ENCODE measurements at regions of chr16 and their contacts with region 1.

Region 1: GRCh38 chr16:11396241-11397048 is 51.2 kb downstream of the RMI2 start:
- DNase-seq: peak; percentile 48 to 75
- ATAC-seq: peak; percentile 79

Region 2: DNA sequence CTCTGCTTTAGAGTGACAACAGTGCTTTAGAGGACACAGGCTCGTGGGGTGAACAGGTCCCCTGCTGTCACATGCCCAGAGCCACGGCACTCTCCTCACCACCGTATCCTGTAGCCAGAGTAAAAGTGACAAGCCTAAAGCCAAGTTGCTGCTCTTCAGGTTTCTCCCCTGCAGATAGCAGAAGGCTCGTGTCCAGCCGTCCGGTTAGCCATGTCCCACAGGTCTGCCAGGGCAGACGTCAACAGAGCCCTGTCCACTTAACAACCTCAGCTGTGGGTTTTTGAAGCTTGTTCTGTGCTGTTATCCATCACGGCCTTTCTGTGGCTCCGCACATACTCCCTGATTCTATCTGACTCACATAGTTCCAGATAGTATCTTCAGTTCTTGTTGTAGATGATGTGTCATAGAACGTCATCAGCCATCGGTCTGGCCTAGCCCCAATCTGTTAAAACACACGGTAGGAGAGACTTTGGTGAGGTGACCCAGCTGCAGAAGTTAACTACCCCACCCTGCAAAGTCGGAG is 241.1 kb before region 1 on chr16:
- intact Hi-C with region 1: no loop called
- DNase-seq: no peak
- ATAC-seq: no peak

Region 3: DNA sequence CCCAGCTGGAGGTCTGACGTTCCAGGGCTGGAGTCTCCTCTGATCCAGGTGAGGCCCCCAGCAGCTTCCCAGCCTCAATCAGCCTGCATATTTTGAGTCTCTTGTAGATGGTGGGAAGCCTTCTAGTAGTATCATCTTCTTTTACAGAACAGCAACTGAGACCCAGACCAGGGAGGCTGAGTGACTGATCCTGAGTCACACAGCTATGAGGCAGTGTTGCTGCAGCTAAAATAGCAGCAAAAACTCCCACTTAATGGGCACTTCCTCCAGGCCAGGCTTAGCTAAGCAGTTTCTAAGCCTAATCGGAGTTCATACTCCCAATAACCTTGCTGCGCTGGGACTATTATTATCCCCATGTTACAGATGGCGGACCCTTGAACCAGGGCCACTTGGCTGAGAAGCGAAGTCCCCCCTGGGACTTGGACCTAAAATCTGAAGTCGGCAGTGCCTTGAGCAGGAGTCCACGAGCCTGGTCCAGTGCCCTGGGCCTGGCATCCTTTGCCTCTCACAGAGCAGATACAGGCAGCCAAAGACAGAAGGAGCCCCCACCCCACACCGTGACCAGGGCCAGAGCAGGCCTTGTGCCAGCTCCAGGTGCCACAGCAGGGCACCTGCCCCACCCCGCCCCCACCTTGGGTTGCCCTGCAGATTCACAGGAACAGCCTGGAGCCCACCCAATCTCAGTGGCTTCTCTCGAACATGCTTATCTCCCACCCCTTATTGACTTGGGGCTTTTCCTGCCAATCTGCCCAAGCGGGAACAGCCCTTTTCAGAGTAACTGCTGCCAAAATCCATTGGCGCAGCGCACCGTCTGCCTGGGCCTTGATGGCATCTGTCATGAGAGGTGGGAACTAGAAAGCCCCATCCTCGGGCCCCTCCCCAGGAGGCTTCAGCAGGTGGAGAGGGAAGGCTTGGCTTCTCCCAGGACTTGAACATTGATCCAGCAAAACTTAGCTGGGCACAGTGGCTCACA is 205.6 kb before region 1 on chr16:
- intact Hi-C with region 1: no loop called
- DNase-seq: no peak
- ATAC-seq: no peak

Region 4: GRCh38 chr16:11715246-11715947 is 319.0 kb after region 1 on chr16:
- intact Hi-C with region 1: loop called in 1 of 2 experiments (anchors 5 kb)
- DNase-seq: no peak
- ATAC-seq: no peak

Region 5: DNA sequence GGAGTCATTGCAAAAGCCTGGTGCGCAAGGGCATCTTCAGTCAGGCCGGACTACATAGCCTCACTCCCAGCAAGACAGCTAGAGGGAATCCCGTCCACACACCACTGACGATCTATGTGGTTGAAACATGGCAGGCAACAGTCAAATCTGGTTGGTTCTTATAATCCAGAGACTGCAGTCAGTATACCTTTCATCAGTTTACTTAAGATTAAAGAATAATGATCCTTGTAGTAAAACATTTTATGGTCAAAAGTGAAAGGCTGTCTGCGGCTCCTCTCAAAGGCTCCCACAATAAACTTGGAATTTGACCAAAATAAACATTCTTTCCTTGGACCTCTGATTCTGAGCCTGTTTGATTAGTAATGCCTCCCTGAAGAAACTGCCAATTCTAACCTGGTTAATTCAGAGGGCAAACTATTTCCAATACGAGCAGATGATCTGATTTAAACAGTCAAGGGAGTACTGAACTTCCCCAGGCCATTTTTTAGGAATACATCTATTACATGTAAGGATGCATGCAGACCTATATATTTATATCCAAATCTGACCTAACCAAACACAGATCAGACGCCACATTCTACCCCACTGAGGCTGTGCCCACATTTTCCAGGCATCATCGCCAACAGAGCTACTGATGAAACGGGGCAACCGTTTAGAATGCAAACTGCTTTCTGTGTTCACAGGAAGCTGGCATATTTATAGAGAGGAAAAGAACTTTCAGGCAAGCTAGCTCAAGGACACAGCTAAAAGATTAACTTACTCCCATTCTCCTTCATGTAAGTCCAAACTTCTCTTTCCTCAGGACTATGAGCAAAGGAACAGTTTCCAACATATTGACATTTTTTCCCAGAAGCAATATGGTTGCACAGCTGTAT is 361.5 kb after region 1 on chr16:
- intact Hi-C with region 1: no loop called
- DNase-seq: peak in 1 of 2 donors; percentile 53
- ATAC-seq: peak; percentile 77

Region 6: GRCh38 chr16:11994143-11995119 is 598.0 kb after region 1 on chr16:
- intact Hi-C with region 1: no loop called
- DNase-seq: peak in 1 of 2 donors; percentile 41
- ATAC-seq: no peak

Region 7: DNA sequence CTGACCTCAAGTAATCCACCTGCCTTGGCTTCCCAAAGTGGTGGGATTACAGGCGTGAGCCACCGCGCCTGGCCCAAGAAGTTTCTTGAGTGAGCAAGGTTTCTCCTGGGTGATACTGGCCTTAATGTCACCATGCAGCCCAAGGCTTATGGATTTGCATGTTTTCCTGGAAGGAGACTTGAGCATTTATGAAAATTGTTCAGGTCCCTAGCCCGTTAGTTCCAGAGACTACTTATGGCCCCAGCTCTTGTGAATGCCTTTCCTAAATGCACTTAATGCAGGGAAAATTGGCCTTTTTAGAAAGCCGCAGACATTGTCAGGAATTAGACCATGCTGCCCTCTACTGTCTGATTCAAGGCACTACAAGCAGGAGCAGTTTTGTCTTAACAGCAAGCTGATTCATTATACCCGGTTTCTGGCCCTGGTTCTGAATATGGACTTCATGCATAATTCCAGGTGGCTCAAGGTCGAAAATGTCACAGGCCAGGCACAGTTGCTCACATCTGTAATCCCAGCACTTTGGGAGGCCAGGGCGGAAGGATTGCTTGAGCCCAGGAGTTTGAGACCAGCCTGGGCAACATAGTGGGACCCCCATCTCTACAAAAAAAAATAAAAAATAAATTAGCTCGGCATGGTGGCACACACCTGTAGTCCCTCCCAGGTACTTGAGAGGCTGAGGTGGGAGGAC is 671.4 kb after region 1 on chr16:
- intact Hi-C with region 1: loop called in 1 of 2 experiments (anchors 10 kb)
- DNase-seq: peak in 1 of 2 donors; percentile 48
- ATAC-seq: peak; percentile 79